Common myeloid progenitor, CD34-positive (primary cell): ENCODE measurements at regions of chr20 and their contacts with region 1.

Region 1: GRCh38 chr20:35729836-35730582 is 12.1 kb downstream of the RBM39 start:
- DNase-seq: peak in 1 of 3 donors; percentile 9
- H3K4me3 ChIP-seq: no peak overlapping the region
- H3K27ac ChIP-seq: no peak overlapping the region
- H3K4me1 ChIP-seq: peaks cover 0 to 2% (median 0%) of the 10 kb centered on the region in 4 experiments
- H3K27me3 ChIP-seq: no peaks in the 10 kb centered on the region

Region 2: GRCh38 chr20:35680452-35681183 is 49.4 kb before region 1 on chr20:
- CTCF ChIA-PET with region 1: no interaction called
- POLR2A ChIA-PET with region 1: no interaction called
- DNase-seq: peak; percentile 26 to 63 (median 59)
- H3K4me3 ChIP-seq: peak overlapping the region in 1 of 7 experiments; percentile 28
- H3K27ac ChIP-seq: no peak overlapping the region
- H3K4me1 ChIP-seq: peaks cover 4 to 11% (median 7%) of the 10 kb centered on the region in 4 experiments
- H3K27me3 ChIP-seq: no peaks in the 10 kb centered on the region

Region 3: DNA sequence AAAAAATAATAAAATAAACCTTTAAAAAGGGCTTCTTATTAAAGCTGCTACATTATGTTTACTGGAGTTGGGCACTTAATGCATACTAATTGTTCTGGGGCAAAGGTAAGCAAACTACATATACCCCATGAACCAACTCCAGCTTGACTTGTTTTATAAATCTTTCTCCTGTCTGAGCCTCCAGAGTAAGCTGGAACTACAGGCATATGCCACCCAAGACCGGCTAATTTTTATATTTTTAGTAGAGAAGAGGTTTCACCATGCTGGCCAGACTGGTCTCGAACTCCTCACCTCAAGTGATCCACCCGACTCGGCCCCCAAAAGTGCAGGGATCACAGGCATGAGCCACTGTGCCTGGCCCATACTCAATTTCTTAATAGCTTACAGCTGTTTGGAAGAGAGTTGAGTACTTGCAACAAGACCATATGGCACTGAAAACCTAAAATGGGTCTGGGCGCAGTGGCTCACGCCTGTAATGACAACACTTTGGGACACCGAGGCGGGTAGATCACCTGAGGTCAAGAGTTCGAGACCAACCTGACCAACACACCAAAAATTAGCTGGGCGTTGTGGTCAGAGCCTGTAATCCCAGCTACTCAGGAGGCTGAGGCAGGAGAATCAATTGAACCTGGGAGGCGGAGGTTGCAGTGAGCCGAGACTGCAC is 10.9 kb before region 1 on chr20:
- CTCF ChIA-PET with region 1: interaction called, 17 read pairs
- POLR2A ChIA-PET with region 1: interaction called, 6 read pairs
- DNase-seq: no peak
- H3K4me3 ChIP-seq: no peak overlapping the region
- H3K27ac ChIP-seq: no peak overlapping the region
- H3K4me1 ChIP-seq: no peaks in the 10 kb centered on the region
- H3K27me3 ChIP-seq: no peaks in the 10 kb centered on the region

Region 4: GRCh38 chr20:35821807-35822242 is 91.8 kb after region 1 on chr20:
- CTCF ChIA-PET with region 1: no interaction called
- POLR2A ChIA-PET with region 1: no interaction called
- DNase-seq: no peak
- H3K4me3 ChIP-seq: no peak overlapping the region
- H3K27ac ChIP-seq: no peak overlapping the region
- H3K4me1 ChIP-seq: peaks cover 0 to 10% (median 5%) of the 10 kb centered on the region in 4 experiments
- H3K27me3 ChIP-seq: no peaks in the 10 kb centered on the region